ENCODE measurements at regions of chr2 and their contacts with region 1.

Region 1: DNA sequence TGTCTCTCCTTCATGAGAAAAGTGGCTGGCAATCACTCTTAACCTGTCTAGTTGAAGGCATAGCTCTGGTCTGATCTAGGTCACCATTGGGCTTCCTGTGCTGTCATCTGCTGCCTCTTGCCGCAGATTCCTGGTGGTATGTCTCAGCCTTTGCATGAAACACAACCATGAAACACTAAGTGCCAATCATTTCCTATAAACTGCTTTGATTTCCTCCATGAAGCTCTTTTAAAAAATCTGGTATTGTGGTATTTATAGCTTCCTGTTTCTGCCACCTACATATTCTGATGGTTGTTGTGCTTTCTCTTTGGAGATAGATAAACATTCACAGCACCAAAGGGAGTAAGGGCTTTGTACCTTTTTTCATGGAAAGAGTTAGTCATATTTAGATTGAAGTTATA is 120.0 kb upstream of the EPC2 start:
- DNase-seq: peak; percentile 53
- H3K4me3 Mint-ChIP-seq: no peak overlapping the region
- H3K27ac Mint-ChIP-seq: peak overlapping the region; percentile 69
- H3K4me1 Mint-ChIP-seq: peaks cover 61% of the 10 kb centered on the region
- H3K27me3 Mint-ChIP-seq: no peaks in the 10 kb centered on the region

Region 2: GRCh38 chr2:147623328-147623727 is 901.2 kb before region 1 on chr2:
- intact Hi-C with region 1: loop called (anchors 10 kb)
- DNase-seq: no peak
- H3K4me3 Mint-ChIP-seq: no peak overlapping the region
- H3K27ac Mint-ChIP-seq: peak overlapping the region; percentile 64
- H3K4me1 Mint-ChIP-seq: peaks cover 29% of the 10 kb centered on the region
- H3K27me3 Mint-ChIP-seq: peaks cover 1% of the 10 kb centered on the region

Region 3: DNA sequence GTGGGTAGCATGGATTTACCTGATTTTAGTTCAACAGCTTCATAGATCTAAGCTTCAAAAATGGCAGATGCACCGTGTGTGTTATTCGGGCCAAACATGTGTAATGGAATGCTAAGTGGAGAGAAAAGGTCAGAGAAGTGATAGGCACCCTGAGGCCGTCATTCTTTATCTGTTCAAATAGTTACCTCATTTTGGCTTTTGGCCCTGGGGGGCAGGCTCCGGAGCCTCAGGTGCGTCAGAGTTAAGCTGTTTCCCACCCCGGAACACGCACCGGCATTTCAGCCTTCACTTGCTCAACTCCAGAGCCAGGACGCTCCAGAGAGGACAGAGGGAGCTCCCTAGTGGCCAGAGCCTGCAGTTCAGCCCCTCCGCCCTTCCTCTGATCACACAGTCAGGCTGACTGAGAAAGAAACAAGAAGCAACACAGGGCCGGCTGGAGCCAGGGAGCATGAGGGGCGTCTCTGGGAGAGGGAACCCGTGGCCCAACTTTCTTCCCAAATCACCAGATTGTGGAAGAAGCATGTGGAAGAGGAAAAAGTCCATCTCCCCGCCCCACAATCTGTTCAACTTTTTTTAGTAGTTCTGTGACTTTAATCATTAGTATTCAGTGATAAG is 15.1 kb before region 1 on chr2:
- intact Hi-C with region 1: loop called (anchors 2 kb)
- DNase-seq: peak; percentile 80
- H3K4me3 Mint-ChIP-seq: peak overlapping the region; percentile 23
- H3K27ac Mint-ChIP-seq: peak overlapping the region; percentile 35
- H3K4me1 Mint-ChIP-seq: peaks cover 22% of the 10 kb centered on the region
- H3K27me3 Mint-ChIP-seq: peaks cover 2% of the 10 kb centered on the region

Region 4: DNA sequence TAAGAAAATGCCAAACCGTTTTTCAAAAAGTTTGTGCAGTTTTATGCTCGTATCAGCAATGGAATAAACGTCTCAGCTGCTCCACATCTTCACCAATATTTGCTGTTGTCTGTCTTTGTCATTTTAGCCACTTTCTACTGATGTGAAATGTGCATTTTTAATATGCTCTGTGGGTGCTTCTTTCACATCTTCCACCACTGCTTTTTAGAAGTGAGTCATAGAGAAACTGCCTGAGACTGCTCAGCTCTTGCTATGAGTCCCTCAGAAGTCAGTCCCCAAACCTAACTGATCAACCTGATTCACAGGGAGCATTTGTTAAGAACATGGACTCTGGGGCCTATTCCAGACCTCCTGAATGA is 79.0 kb after region 1 on chr2:
- intact Hi-C with region 1: loop called (anchors 1 kb)
- DNase-seq: peak; percentile 28
- H3K4me3 Mint-ChIP-seq: no peak overlapping the region
- H3K27ac Mint-ChIP-seq: peak overlapping the region; percentile 95
- H3K4me1 Mint-ChIP-seq: peaks cover 28% of the 10 kb centered on the region
- H3K27me3 Mint-ChIP-seq: peaks cover 4% of the 10 kb centered on the region

Region 5: DNA sequence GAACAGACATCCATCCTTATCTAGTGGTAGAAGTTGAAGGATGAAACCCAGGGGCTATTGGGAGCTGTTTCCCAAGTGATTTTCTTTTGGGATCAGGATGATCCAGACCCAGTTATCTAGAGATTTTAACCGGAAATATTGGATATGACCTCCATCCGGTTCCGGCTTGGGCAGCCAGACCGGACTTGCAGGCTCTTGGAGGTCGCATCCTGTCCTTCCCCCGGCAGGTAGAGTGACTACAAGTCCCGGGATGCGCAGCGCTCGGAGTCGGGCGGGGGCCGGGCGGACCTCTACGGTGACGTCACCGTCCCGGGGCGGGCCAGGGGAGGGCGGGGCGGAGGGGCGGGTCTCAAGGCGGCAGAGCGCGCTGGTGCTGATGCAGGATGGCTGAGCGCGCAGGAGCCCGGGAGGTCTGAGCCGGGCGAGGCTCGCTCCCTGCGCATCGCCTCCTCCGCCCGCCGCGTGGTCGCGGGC is 350.4 kb after region 1 on chr2 and contains the start of gene KIF5C:
- intact Hi-C with region 1: loop called (anchors 5 kb)
- DNase-seq: peak; percentile 73
- H3K4me3 Mint-ChIP-seq: peak within 1 kb of the TSS; percentile 84
- H3K27ac Mint-ChIP-seq: peak within 1 kb of the TSS; percentile 49
- H3K4me1 Mint-ChIP-seq: peaks cover 14% of the 10 kb centered on the region
- H3K27me3 Mint-ChIP-seq: peaks cover 21% of the 10 kb centered on the region
- total RNA-seq, gene KIF5C: 12.9 and 17.3 TPM in 2 replicates